B cell (primary cell): ENCODE measurements at regions of chr15 and their contacts with region 1.

Region 1: DNA sequence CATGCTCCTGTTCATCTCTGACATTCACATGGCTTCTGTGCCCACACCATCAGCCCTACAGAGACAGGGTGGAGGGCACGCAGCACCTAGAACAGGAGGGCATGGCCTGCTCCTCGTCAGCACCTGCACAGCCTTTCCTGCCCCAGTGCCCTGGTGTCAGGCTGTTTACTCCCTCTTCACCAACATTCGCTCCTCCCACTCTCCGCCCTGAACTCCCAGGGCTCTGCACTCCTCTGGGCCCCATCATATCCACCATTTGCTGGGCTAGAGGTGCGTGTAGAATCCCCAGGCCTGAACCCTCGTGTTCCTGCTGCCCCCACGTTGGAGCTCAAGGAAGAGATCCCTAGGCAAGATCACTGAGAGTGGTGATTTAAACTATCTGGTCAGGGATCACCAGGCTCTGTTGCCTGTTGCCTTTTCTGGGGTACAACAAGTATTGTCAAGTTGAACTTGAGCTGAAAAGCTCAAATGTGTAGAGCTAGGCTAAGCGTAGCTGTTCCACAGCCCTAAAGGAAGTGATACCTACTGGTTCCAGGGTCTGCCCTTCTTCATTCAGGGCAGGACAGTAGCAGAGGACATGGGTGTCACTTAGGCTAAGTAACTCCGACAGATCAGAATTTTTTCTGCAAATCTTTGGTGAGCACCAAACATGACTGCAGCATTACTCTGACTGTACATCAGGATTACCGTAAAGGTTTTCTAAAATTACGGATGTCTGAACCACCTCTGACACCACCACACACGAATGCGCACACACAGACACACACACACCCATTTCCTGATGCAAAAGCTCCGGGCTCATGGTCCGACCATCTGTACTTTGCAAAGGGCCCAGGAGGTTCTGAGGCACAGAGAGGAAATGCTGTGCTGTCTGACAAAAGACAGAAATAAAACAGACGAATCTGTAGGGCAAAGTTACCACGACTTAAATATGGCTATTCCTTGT is 43.7 kb upstream of the GNB5 start:
- DNase-seq: peak; percentile 81
- ATAC-seq: peak; percentile 57
- H3K4me3 ChIP-seq: peak overlapping the region in 3 of 5 experiments; percentile 3 to 54 (median 10)
- H3K4me3 Mint-ChIP-seq: peak overlapping the region; percentile 92
- H3K27ac ChIP-seq: peak overlapping the region; percentile 89 to 97
- H3K27ac Mint-ChIP-seq: peak overlapping the region; percentile 99
- H3K4me1 ChIP-seq: peaks cover 72 to 79% of the 10 kb centered on the region in 2 donors
- H3K4me1 Mint-ChIP-seq: peaks cover 75% of the 10 kb centered on the region
- H3K27me3 ChIP-seq: no peaks in the 10 kb centered on the region
- H3K27me3 Mint-ChIP-seq: no peaks in the 10 kb centered on the region
- CTCF ChIP-seq: no peak

Region 2: GRCh38 chr15:52208306-52208946 is 26.4 kb before region 1 on chr15:
- CTCF ChIA-PET with region 1: interaction called, 94 read pairs
- POLR2A ChIA-PET with region 1: no interaction called
- intact Hi-C with region 1: no loop called
- DNase-seq: peak; percentile 73
- ATAC-seq: peak; percentile 95
- H3K4me3 ChIP-seq: no peak overlapping the region
- H3K4me3 Mint-ChIP-seq: no peak overlapping the region
- H3K27ac ChIP-seq: no peak overlapping the region
- H3K27ac Mint-ChIP-seq: no peak overlapping the region
- H3K4me1 ChIP-seq: no peaks in the 10 kb centered on the region
- H3K4me1 Mint-ChIP-seq: no peaks in the 10 kb centered on the region
- H3K27me3 ChIP-seq: no peaks in the 10 kb centered on the region
- H3K27me3 Mint-ChIP-seq: no peaks in the 10 kb centered on the region
- CTCF ChIP-seq: peak; percentile 86

Region 3: DNA sequence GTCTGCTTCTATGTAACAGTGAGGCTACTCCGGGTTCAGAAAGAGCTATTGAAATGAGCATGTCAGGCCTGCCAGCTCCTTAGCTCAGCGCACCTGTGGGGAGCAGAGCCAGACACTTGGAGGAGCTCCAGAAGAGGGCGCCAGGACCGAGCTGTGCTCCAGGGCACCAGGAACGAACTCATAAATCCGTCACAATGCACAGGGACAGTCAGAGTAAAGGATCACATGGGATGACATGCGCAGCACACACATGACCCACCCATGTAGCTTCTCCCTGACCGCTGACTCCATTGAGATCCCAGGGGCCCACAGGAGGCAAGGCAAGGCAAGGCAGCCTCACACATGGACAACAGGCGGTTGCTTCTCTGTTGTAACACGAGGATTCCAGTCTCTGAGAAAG is 17.7 kb before region 1 on chr15:
- CTCF ChIA-PET with region 1: interaction called, 109 read pairs
- POLR2A ChIA-PET with region 1: interaction called, 9 read pairs
- intact Hi-C with region 1: loop called (anchors 2 kb)
- DNase-seq: peak; percentile 52
- ATAC-seq: peak; percentile 58
- H3K4me3 ChIP-seq: no peak overlapping the region
- H3K4me3 Mint-ChIP-seq: no peak overlapping the region
- H3K27ac ChIP-seq: no peak overlapping the region
- H3K27ac Mint-ChIP-seq: peak overlapping the region; percentile 47
- H3K4me1 ChIP-seq: peaks cover 19 to 21% of the 10 kb centered on the region in 2 donors
- H3K4me1 Mint-ChIP-seq: peaks cover 32% of the 10 kb centered on the region
- H3K27me3 ChIP-seq: no peaks in the 10 kb centered on the region
- H3K27me3 Mint-ChIP-seq: no peaks in the 10 kb centered on the region
- CTCF ChIP-seq: peak; percentile 45

Region 4: DNA sequence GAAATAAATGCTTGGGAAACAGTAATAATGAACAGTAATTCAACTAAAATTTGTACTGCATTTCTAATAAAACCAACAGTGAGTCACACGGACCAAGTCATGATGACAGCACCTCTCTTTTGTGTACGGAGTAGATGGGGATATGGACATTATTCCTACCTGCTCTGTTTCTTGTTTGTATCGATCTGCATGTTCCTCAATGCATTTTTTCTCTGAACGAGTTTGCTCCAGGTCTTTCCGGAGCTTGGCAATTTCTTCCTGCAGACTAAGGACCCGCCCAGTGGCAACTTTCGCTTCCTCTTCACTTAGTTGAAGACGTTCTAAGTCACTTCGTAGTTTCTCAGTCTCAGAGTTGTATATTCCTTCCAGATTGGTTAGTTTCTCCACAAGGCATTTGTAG is 135.1 kb after region 1 on chr15:
- CTCF ChIA-PET with region 1: no interaction called
- POLR2A ChIA-PET with region 1: no interaction called
- intact Hi-C with region 1: no loop called
- DNase-seq: peak; percentile 44
- ATAC-seq: peak; percentile 57
- H3K4me3 ChIP-seq: peak overlapping the region in 1 of 5 experiments; percentile 8
- H3K4me3 Mint-ChIP-seq: peak overlapping the region; percentile 72
- H3K27ac ChIP-seq: peak overlapping the region in 1 of 2 donors; percentile 66
- H3K27ac Mint-ChIP-seq: peak overlapping the region; percentile 76
- H3K4me1 ChIP-seq: peaks cover 0 to 2% of the 10 kb centered on the region in 2 donors
- H3K4me1 Mint-ChIP-seq: peaks cover 9% of the 10 kb centered on the region
- H3K27me3 ChIP-seq: no peaks in the 10 kb centered on the region
- H3K27me3 Mint-ChIP-seq: no peaks in the 10 kb centered on the region
- CTCF ChIP-seq: no peak

Region 5: DNA sequence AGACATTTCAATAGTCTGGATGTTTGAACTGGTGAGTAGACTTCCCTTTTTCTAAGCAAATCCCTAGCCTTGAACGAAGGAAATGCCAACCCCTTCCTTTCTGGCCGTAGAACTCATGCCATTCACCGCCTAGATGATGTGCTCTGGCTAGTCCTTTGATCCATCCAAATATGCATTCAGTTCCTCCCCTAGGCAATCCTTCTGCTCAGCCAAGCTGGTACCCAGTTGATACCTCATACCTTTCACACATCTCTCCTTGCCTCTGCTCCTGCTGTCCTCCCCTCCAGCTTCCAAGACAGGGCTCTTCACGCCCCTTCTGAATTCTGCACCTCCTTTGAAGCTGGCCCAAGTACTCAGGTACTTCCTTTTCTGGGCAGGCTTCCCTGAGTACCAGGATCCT is 484.8 kb after region 1 on chr15:
- CTCF ChIA-PET with region 1: no interaction called
- POLR2A ChIA-PET with region 1: interaction called, 11 read pairs
- intact Hi-C with region 1: no loop called
- DNase-seq: no peak
- ATAC-seq: no peak
- H3K4me3 ChIP-seq: no peak overlapping the region
- H3K4me3 Mint-ChIP-seq: no peak overlapping the region
- H3K27ac ChIP-seq: no peak overlapping the region
- H3K27ac Mint-ChIP-seq: no peak overlapping the region
- H3K4me1 ChIP-seq: no peaks in the 10 kb centered on the region
- H3K4me1 Mint-ChIP-seq: peaks cover 10% of the 10 kb centered on the region
- H3K27me3 ChIP-seq: no peaks in the 10 kb centered on the region
- H3K27me3 Mint-ChIP-seq: no peaks in the 10 kb centered on the region
- CTCF ChIP-seq: no peak